Heart left ventricle (tissue), 16 donors: ENCODE measurements at regions of chr13 and their contacts with region 1.

Region 1: GRCh38 chr13:19959831-19960652 is 1.5 kb downstream of the ZMYM2 start:
- DNase-seq: peak; percentile 82 to 89 (median 87)
- ATAC-seq: peak; percentile 49 to 70 (median 56)
- H3K4me3 ChIP-seq: peak overlapping the region; percentile 68 to 96 (median 87)
- H3K27ac ChIP-seq: peak overlapping the region; percentile 78 to 99 (median 97)
- H3K4me1 ChIP-seq: peaks cover 5 to 47% (median 42%) of the 10 kb centered on the region in 12 donors
- H3K27me3 ChIP-seq: no peaks in the 10 kb centered on the region
- CTCF ChIP-seq: peak; percentile 66 to 95 (median 90)
- POLR2A ChIP-seq: peak in 1 of 2 donors; percentile 39

Region 2: GRCh38 chr13:19633479-19634255 is 326.4 kb before region 1 on chr13 and contains the start of gene MPHOSPH8:
- intact Hi-C with region 1: loop called in 1 of 10 experiments (anchors 5 kb)
- DNase-seq: peak; percentile 95 to 97 (median 96)
- ATAC-seq: peak; percentile 99
- H3K4me3 ChIP-seq: peak within 1 kb of the TSS; percentile 58 to 96 (median 82)
- H3K27ac ChIP-seq: peak within 1 kb of the TSS; percentile 79 to 98 (median 94)
- H3K4me1 ChIP-seq: peaks cover 7 to 40% (median 30%) of the 10 kb centered on the region in 12 donors
- H3K27me3 ChIP-seq: no peaks in the 10 kb centered on the region
- CTCF ChIP-seq: no peak
- POLR2A ChIP-seq: peak; percentile 78
- total RNA-seq, gene MPHOSPH8: 15.2 to 39.3 (median 26.1) TPM

Region 3: DNA sequence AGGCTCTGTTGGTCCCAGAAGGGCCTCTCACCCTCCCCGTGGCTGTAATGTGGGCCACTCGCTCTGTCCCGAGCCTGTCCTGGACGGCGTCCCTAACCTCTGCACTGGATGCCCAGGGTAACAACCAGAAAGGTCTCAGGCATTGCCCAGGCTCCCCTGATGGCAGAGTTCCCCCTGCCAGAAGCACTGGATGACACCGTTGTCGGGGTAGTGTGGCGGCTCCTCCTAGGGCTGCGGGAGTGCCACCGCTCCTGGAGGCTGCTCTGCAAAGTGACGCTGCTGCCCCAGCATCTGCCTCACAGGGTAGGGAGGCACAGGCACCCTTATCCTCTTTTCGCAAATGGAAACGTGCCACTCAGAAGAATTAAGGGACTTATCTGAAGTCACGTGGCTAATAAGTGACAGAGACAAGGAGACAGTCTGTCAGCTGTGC is 294.6 kb before region 1 on chr13:
- intact Hi-C with region 1: no loop called
- DNase-seq: peak in 3 of 5 donors; percentile 18 to 56 (median 53)
- ATAC-seq: peak; percentile 74 to 84 (median 82)
- H3K4me3 ChIP-seq: no peak overlapping the region
- H3K27ac ChIP-seq: peak overlapping the region in 3 of 12 donors; percentile 24 to 55 (median 33)
- H3K4me1 ChIP-seq: peaks cover 0 to 17% (median 6%) of the 10 kb centered on the region in 12 donors
- H3K27me3 ChIP-seq: no peaks in the 10 kb centered on the region
- CTCF ChIP-seq: no peak
- POLR2A ChIP-seq: no peak

Region 4: GRCh38 chr13:19782049-19782726 is 177.9 kb before region 1 on chr13:
- intact Hi-C with region 1: loop called in 2 of 10 experiments (anchors 5 to 10 kb)
- DNase-seq: peak; percentile 41 to 83 (median 59)
- ATAC-seq: peak; percentile 44 to 73 (median 71)
- H3K4me3 ChIP-seq: peak overlapping the region; percentile 62 to 99 (median 86)
- H3K27ac ChIP-seq: peak overlapping the region; percentile 87 to 99 (median 92)
- H3K4me1 ChIP-seq: peaks cover 0 to 16% (median 8%) of the 10 kb centered on the region in 12 donors
- H3K27me3 ChIP-seq: no peaks in the 10 kb centered on the region
- CTCF ChIP-seq: peak in 1 of 12 donors; percentile 8
- POLR2A ChIP-seq: no peak

Region 5: GRCh38 chr13:19852766-19853165 is 107.3 kb before region 1 on chr13:
- intact Hi-C with region 1: no loop called
- DNase-seq: no peak
- ATAC-seq: no peak
- H3K4me3 ChIP-seq: no peak overlapping the region
- H3K27ac ChIP-seq: no peak overlapping the region
- H3K4me1 ChIP-seq: peaks cover 0 to 5% (median 0%) of the 10 kb centered on the region in 12 donors
- H3K27me3 ChIP-seq: no peaks in the 10 kb centered on the region
- CTCF ChIP-seq: no peak
- POLR2A ChIP-seq: no peak

Region 6: GRCh38 chr13:19863323-19864023 is 96.6 kb before region 1 on chr13 and contains the start of gene ZMYM5:
- intact Hi-C with region 1: loop called in 9 of 10 experiments (anchors 1 to 10 kb)
- DNase-seq: peak; percentile 99 to 100 (median 100)
- ATAC-seq: peak; percentile 96 to 99 (median 98)
- H3K4me3 ChIP-seq: peak within 1 kb of the TSS; percentile 73 to 97 (median 88)
- H3K27ac ChIP-seq: peak within 1 kb of the TSS; percentile 89 to 100 (median 98)
- H3K4me1 ChIP-seq: peaks cover 0 to 33% (median 20%) of the 10 kb centered on the region in 12 donors
- H3K27me3 ChIP-seq: no peaks in the 10 kb centered on the region
- CTCF ChIP-seq: no peak
- POLR2A ChIP-seq: peak in 1 of 2 donors; percentile 91
- total RNA-seq, gene ZMYM5: 5.7 to 10.2 (median 7.5) TPM